ENCODE measurements at regions of chr2 and their contacts with region 1.

Region 1: GRCh38 chr2:142974288-142975024 is 97.0 kb downstream of the KYNU start:
- DNase-seq: peak; percentile 92
- H3K4me3 ChIP-seq: no peak overlapping the region
- H3K27ac ChIP-seq: peak overlapping the region; percentile 87
- H3K4me1 ChIP-seq: peaks cover 23% of the 10 kb centered on the region
- H3K27me3 ChIP-seq: no peaks in the 10 kb centered on the region
- CTCF ChIP-seq: no peak
- POLR2A ChIP-seq: no peak

Region 2: DNA sequence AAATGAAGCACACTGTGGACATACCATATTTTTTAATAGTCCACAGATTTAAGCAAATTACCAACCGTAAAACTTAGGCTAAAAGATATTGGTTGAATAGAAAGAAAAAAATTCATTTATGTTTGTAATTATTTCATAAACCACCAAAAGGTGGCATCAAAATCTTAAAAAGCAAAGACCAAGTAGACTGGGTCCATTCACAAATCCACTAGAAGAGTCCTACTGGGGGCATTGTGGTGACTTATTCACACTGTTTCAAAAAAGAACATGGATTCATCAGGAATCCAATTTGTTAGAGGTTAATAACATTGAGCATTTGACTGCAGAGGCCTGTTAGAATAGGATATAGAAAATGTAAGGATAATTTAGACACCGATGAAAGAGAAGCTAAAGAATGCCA is 291.9 kb before region 1 on chr2:
- CTCF ChIA-PET with region 1: interaction called, 100 read pairs
- POLR2A ChIA-PET with region 1: no interaction called
- dilution Hi-C with region 1: no loop called
- intact Hi-C with region 1: no loop called
- DNase-seq: peak; percentile 46
- H3K4me3 ChIP-seq: no peak overlapping the region
- H3K27ac ChIP-seq: no peak overlapping the region
- H3K4me1 ChIP-seq: no peaks in the 10 kb centered on the region
- H3K27me3 ChIP-seq: peaks cover 0 to 3% of the 10 kb centered on the region in 2 experiments
- CTCF ChIP-seq: no peak
- POLR2A ChIP-seq: no peak

Region 3: GRCh38 chr2:142843731-142844130 is 130.7 kb before region 1 on chr2:
- CTCF ChIA-PET with region 1: interaction called, 5 read pairs
- POLR2A ChIA-PET with region 1: no interaction called
- dilution Hi-C with region 1: no loop called
- intact Hi-C with region 1: loop called (anchors 1 kb)
- DNase-seq: peak; percentile 92
- H3K4me3 ChIP-seq: no peak overlapping the region
- H3K27ac ChIP-seq: peak overlapping the region; percentile 58
- H3K4me1 ChIP-seq: peaks cover 44% of the 10 kb centered on the region
- H3K27me3 ChIP-seq: no peaks in the 10 kb centered on the region
- CTCF ChIP-seq: no peak
- POLR2A ChIP-seq: no peak

Region 4: DNA sequence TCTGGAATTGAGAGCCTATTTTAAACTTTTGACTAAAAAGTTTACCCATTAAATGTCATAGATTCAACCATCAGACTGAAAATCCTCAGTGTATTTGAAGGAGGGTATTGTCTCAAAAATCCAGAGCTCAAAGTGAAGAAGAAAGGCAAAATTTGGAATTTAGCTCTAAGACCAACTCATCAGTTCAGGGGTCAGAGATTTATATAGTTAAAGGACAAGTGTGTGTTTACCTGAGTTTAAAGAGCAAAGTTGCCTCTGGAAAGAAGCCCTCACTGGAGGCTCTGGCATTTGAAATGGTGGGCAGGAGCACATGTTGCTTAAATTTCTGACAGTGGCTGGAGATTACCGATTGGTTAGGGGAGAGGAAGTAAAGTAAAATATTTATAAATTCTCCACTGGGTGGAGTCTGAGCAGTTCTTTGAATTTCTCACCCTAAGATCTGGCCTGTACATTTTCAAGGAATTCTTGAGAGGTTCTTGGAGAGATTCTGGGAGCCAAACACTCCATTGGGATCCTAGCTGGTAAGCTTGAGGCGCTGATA is 97.2 kb before region 1 on chr2 and contains the start of gene KYNU:
- CTCF ChIA-PET with region 1: interaction called, 17 read pairs
- POLR2A ChIA-PET with region 1: no interaction called
- dilution Hi-C with region 1: no loop called
- intact Hi-C with region 1: loop called (anchors 1 kb)
- DNase-seq: no peak
- H3K4me3 ChIP-seq: no peak within 1 kb of the TSS
- H3K27ac ChIP-seq: no peak within 1 kb of the TSS
- H3K4me1 ChIP-seq: peaks cover 23% of the 10 kb centered on the region
- H3K27me3 ChIP-seq: no peaks in the 10 kb centered on the region
- CTCF ChIP-seq: no peak
- POLR2A ChIP-seq: no peak
- total RNA-seq, gene KYNU: 0.25 TPM in 1 of 2 replicates, not detected in the other

Region 5: GRCh38 chr2:142989273-142990204 is 15.1 kb after region 1 on chr2:
- CTCF ChIA-PET with region 1: interaction called, 16 read pairs
- POLR2A ChIA-PET with region 1: no interaction called
- dilution Hi-C with region 1: no loop called
- intact Hi-C with region 1: no loop called
- DNase-seq: peak; percentile 46
- H3K4me3 ChIP-seq: no peak overlapping the region
- H3K27ac ChIP-seq: no peak overlapping the region
- H3K4me1 ChIP-seq: no peaks in the 10 kb centered on the region
- H3K27me3 ChIP-seq: no peaks in the 10 kb centered on the region
- CTCF ChIP-seq: peak; percentile 9 to 22
- POLR2A ChIP-seq: no peak

Measured in endothelial cell of umbilical vein (primary cell).